ENCODE measurements at regions of chr10 and their contacts with region 1.

Region 1: DNA sequence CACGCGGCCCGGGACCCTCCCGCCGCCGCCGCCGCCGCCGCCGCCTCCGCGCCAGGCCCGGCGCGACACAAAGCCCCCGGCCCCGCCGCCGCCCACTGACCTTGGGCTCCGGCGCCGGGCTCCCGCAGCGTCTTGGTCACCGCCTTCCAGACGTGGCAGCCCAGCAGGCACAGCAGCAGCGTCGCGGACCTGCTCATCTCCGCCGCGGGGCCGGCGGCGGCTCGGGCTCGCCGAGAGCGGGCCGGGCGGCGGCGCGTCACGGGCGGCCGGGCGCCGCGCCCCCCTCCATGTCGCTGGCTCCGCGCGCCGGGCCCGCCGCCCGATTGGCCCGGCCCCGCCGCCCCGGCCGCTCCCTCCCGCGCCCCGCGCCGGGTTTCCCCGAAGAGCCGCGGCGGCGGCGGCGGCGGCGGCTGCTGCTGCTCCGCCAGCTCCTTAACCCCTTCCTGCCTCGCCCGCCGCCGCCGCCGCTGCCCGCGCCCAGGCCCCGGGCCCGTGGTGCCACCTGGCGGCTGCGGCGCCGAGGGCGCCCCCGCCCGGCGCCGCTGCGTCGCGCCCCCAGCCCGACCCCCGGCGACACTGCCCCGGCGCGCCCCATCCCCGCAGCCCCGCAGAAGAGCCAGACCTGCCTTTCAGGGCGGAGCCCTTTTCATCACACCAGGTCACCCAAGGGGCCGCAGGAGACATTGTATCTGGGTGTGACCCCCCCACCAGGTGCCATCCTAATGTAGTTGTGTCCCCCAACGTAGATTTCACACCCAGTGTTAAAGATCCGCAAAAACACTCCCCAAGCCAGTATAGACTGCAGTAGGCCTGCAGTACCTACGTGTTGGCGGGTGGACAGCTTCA is at the start of gene FAM171A1:
- DNase-seq: peak in 39 of 42 donors; percentile 50 to 90 (median 76)

Region 2: GRCh38 chr10:14967897-14968296 is 403.2 kb before region 1 on chr10:
- intact Hi-C with region 1: no loop called
- DNase-seq: no peak

Region 3: DNA sequence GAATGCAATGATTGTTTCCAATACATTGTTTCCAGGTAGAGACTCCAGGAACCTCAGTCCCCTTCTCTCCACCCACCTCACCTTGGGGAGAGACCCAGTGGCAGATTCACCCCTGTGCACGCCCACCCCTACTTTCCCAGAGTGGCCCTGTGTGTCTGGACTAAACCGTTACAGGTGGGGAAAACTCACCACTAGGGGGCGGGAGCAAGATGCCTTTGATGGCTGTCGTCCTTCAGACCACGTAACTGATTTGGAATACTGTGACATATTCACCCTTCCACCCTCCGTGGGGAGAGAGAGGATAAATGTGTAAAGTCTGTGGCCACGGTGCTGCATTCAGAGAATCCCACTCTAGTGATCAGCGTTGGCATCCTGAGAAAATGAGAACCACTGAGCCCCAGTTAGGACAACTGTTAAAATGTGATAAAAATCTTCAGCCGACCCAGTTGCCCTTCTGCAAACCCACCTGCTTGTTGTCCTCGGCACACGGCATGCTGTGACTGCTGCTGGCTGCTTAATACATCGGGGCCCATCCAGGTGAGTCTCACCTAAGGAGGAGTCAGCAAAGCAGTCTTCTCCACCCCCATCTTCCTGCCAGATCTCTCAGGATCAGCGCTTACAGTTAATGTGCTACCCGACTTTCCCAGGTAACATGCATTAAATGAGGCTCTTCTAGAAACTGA is 161.1 kb before region 1 on chr10:
- intact Hi-C with region 1: loop called (anchors 2 kb)
- DNase-seq: peak; percentile 69 to 98 (median 90)

Region 4: GRCh38 chr10:15254808-15255648 is 116.1 kb before region 1 on chr10:
- intact Hi-C with region 1: loop called (anchors 5 kb)
- DNase-seq: peak in 38 of 42 donors; percentile 31 to 86 (median 64)